ENCODE measurements at regions of chr13 and their contacts with region 1.

Region 1: DNA sequence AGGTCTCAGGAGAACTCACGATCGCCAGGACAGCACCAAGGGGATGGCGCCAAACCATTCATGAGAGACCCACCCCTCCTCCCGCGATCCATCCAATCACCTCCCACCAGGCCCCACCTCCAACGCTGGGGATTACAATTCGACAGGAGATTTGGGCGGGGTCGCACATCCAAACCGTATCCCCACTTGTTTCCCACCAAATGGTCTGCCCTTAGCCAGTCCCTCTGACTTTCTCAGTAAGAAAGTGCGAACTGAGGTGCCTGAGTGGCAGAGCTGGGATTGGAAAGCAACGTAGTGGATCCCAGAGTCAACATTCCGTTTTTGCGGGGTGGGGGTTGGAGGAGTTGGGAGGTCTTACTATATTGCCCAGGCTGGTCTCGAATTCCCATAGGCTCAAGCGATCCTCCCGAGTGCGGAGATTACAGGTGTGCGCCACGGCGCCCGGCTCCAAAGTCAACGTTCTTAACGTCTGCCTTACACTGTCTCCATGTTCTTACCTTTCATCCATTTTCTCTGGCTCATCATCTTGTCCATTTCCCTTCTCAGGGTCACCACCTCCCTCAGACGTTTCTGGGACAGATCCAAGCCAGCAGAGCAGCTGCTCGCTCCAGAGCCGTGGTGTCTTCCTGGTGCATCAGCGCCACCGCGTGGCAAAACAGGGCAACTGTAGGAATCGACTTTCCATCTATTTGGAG is 102.7 kb upstream of the ABCC4 start:
- DNase-seq: peak; percentile 78
- H3K4me3 ChIP-seq: peak overlapping the region in 2 of 3 experiments; percentile 0 to 18
- H3K27ac ChIP-seq: no peak overlapping the region
- H3K4me1 ChIP-seq: peaks cover 5% of the 10 kb centered on the region
- H3K27me3 ChIP-seq: no peaks in the 10 kb centered on the region
- CTCF ChIP-seq: peak; percentile 88 to 90
- POLR2A ChIP-seq: no peak

Region 2: DNA sequence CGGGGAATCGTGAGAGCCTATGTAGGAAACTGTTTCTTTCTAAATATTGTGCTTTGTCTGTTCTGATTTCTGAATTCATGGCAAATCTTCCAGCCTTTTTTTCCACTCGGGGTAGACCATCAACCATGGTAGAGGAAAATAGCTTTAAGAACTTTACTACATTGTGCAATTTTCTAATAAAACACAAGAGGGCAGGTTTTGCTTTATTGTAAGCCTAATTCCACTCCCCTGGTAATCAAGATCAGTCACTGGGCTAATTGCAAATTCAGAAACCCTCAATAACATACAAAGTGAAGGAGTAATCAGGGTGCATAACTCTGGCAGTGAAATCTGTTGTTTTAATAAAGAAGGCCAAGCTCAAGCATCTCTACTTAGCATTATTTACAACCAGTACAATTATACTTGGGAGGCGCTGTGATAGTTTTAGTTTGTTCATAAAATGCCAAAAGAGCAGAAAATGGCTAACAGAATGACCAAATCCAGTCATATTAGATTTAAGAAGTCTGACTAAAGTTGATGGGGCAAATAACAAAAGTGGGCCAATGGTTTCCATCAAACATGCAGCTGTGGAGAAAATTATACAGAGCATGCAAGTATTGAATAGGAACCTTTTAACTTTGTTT is 968.3 kb before region 1 on chr13:
- CTCF ChIA-PET with region 1: interaction called, 10 read pairs
- POLR2A ChIA-PET with region 1: no interaction called
- dilution Hi-C with region 1: no loop called
- intact Hi-C with region 1: loop called (anchors 5 kb)
- DNase-seq: peak; percentile 43
- H3K4me3 ChIP-seq: no peak overlapping the region
- H3K27ac ChIP-seq: no peak overlapping the region
- H3K4me1 ChIP-seq: no peaks in the 10 kb centered on the region
- H3K27me3 ChIP-seq: peaks cover 15 to 18% of the 10 kb centered on the region in 2 experiments
- CTCF ChIP-seq: peak; percentile 27 to 35
- POLR2A ChIP-seq: no peak

Region 3: DNA sequence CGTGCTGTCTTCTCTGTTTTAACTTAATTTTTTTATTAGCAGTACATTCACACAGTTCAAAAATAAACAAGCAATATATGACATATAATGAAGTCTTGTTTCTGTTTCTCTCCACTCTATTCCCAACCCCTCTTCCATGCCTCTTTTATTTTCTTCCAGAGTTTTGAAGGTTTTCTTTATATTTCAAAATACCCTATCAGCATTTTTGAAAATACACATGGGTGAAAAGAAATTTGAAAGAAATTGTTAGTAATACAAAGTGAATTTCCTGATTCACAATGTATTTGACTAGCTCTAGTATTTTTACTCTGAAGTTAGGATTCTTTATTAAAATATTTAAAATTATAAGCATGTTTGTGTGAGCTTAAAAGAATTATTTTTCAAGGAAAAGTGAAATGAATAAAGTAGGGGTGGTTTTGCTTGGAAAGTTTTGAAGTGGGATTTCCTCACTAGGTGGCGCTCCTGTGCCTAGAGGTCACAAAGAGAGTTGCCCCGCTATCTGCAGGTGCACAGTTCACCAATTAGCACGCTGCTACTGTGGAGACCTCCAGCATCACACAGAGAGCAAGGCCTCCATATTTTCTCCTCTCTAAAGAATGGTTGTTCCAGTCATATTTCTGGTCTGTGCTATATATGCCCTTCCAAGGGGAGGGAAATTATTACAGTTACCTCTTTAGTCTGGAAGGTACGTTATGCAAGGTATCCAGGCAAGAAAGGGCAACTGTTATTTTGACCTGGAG is 729.2 kb before region 1 on chr13:
- CTCF ChIA-PET with region 1: interaction called, 29 read pairs
- POLR2A ChIA-PET with region 1: no interaction called
- dilution Hi-C with region 1: no loop called
- intact Hi-C with region 1: loop called (anchors 1 kb)
- DNase-seq: peak; percentile 49
- H3K4me3 ChIP-seq: no peak overlapping the region
- H3K27ac ChIP-seq: no peak overlapping the region
- H3K4me1 ChIP-seq: no peaks in the 10 kb centered on the region
- H3K27me3 ChIP-seq: peaks cover 6 to 26% of the 10 kb centered on the region in 2 experiments
- CTCF ChIP-seq: peak; percentile 60 to 78
- POLR2A ChIP-seq: no peak

Region 4: DNA sequence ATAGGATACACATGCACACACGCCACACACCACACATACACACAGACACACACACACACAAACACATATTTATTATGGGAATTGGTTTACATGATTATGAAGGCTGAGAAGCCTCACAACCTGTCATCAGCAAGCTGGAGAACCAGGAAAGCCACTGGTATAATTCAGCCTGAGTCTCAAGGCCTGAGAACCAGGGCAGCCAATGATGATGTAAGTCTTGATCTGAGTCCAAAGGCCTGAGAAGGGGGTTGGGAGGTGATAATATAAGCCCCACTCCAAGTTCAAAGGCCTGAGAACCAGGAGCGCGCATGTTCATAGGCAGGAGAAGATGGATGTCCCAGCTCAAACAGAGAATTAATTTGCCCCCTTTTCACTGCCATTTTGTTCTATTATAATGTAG is 672.9 kb before region 1 on chr13:
- CTCF ChIA-PET with region 1: no interaction called
- POLR2A ChIA-PET with region 1: no interaction called
- dilution Hi-C with region 1: no loop called
- intact Hi-C with region 1: no loop called
- DNase-seq: no peak
- H3K4me3 ChIP-seq: no peak overlapping the region
- H3K27ac ChIP-seq: no peak overlapping the region
- H3K4me1 ChIP-seq: no peaks in the 10 kb centered on the region
- H3K27me3 ChIP-seq: peaks cover 2 to 7% of the 10 kb centered on the region in 2 experiments
- CTCF ChIP-seq: no peak
- POLR2A ChIP-seq: no peak

Region 5: DNA sequence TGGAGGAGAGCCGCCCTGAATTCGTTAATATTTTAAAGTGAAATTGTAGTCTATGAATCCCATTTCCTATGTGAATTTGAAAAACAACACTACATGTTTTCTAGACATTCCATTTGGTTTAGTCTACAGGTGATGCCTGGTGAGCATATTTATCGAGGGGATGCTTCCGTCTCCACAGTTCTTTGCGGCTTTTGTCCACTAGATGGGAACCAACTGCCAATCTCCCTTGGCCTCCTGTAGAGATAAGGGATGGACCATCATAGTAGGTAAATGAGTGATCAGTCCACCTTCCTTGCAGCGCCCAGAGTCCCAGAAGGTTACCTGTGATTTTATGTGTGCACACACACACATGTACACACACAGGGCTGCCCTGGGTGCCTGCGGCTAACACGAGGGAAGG is 401.8 kb before region 1 on chr13:
- CTCF ChIA-PET with region 1: no interaction called
- POLR2A ChIA-PET with region 1: no interaction called
- dilution Hi-C with region 1: no loop called
- intact Hi-C with region 1: no loop called
- DNase-seq: no peak
- H3K4me3 ChIP-seq: no peak overlapping the region
- H3K27ac ChIP-seq: no peak overlapping the region
- H3K4me1 ChIP-seq: peaks cover 11% of the 10 kb centered on the region
- H3K27me3 ChIP-seq: peaks cover 3 to 7% of the 10 kb centered on the region in 2 experiments
- CTCF ChIP-seq: no peak
- POLR2A ChIP-seq: no peak

Region 6: DNA sequence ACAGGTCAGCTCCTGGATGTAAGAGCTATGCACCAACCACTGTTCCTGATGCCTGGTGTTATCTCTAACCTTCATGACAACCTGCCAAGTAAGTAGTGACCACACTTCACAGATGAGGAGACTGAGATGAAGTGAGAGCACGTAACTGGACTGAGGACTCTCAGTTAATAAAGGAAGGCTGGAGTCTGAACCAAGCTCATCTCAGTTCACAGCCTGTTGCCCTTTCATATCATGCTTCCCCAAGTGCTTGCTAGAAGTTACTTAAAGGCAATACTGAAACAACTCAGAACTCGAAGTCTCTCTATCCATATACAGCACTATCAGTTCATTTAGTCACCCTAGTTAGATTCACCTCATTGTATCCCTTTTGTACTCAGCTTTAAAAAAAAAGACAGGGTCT is 222.4 kb before region 1 on chr13:
- CTCF ChIA-PET with region 1: interaction called, 633 read pairs
- POLR2A ChIA-PET with region 1: no interaction called
- dilution Hi-C with region 1: no loop called
- intact Hi-C with region 1: no loop called
- DNase-seq: no peak
- H3K4me3 ChIP-seq: no peak overlapping the region
- H3K27ac ChIP-seq: no peak overlapping the region
- H3K4me1 ChIP-seq: peaks cover 2% of the 10 kb centered on the region
- H3K27me3 ChIP-seq: no peaks in the 10 kb centered on the region
- CTCF ChIP-seq: no peak
- POLR2A ChIP-seq: no peak

Region 7: DNA sequence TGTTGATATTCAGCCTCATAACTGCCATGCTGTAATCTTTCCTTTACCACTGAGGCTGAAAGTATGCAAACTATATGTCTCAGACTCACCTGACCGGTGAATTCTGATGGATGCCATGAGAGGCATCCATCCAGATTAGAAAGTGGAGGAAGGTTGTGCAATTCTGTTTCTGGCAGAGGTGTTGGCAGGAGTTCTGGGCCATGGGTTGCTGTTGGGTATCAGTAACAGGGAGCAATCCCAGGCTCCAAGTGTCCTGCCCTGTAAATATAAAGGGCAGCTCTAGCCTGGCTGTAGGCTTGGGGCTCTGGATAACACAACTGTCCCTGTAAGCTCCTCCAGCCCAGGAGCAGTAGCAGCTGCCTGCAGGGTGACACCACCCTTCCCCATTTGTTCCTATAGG is 25.4 kb before region 1 on chr13:
- CTCF ChIA-PET with region 1: interaction called, 76 read pairs
- POLR2A ChIA-PET with region 1: interaction called, 3 read pairs
- dilution Hi-C with region 1: no loop called
- intact Hi-C with region 1: loop called (anchors 1 kb)
- DNase-seq: no peak
- H3K4me3 ChIP-seq: no peak overlapping the region
- H3K27ac ChIP-seq: no peak overlapping the region
- H3K4me1 ChIP-seq: peaks cover 3% of the 10 kb centered on the region
- H3K27me3 ChIP-seq: peaks cover 2 to 6% of the 10 kb centered on the region in 2 experiments
- CTCF ChIP-seq: no peak
- POLR2A ChIP-seq: no peak

Region 8: DNA sequence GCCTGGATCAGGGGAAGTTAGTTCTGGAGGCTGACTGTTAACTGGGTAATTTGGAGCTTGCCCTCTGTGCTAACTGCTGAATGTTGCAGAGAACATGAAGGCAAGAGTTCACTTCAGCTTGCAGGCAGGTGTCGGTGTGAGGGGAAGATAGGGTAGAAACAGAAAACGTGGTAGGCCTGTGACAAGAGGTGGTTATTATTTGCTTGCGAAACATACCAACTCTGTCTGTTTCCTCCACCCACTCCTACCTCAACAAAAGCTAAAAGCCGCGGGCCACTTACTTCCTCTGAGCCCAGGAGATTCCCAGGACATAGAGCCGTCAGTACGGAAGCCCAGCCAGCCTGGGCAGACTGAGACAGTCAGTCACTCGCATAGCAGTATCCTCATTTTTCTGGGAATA is 16.5 kb after region 1 on chr13:
- CTCF ChIA-PET with region 1: interaction called, 20 read pairs
- POLR2A ChIA-PET with region 1: no interaction called
- dilution Hi-C with region 1: no loop called
- intact Hi-C with region 1: no loop called
- DNase-seq: no peak
- H3K4me3 ChIP-seq: no peak overlapping the region
- H3K27ac ChIP-seq: no peak overlapping the region
- H3K4me1 ChIP-seq: no peaks in the 10 kb centered on the region
- H3K27me3 ChIP-seq: peaks cover 0 to 3% of the 10 kb centered on the region in 2 experiments
- CTCF ChIP-seq: no peak
- POLR2A ChIP-seq: no peak

Region 9: DNA sequence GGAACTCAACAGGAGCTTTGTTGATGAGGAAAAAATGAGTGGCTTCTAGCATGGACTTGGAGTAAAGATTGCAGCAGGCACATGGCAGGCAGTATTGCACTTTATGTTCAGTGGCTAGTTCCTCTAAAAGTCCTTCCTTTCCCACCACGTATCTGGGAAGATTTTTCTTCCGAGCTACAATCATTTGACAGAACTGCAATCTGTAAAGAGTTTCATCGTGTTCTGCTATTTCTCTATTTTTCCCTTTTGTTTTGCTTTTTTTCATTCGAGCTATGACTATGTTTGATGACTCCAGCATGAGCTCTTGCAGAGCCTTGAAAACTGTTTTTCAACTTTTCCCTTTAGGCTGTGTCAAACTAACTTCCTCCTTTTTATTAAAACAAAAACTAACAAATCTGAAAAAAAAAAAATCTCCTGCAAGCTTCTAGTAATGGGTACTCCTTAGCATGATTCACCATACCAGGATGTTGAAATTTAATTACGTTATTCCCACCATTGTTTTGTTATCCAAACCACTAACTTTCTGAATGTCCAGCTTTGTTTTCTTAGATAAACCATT is 160.8 kb after region 1 on chr13:
- CTCF ChIA-PET with region 1: interaction called, 13 read pairs
- POLR2A ChIA-PET with region 1: no interaction called
- dilution Hi-C with region 1: no loop called
- intact Hi-C with region 1: no loop called
- DNase-seq: peak; percentile 91
- H3K4me3 ChIP-seq: no peak overlapping the region
- H3K27ac ChIP-seq: peak overlapping the region; percentile 44
- H3K4me1 ChIP-seq: peaks cover 11% of the 10 kb centered on the region
- H3K27me3 ChIP-seq: no peaks in the 10 kb centered on the region
- CTCF ChIP-seq: no peak
- POLR2A ChIP-seq: no peak